Activated B cell treated with CpG ODN at 0.5 μM for 24 hours (primary cell): ENCODE measurements at regions of chr2 and their contacts with region 1.

Region 1: GRCh38 chr2:33583194-33583938 is 15.7 kb downstream of the FAM98A start:
- DNase-seq: no peak
- ATAC-seq: peak; percentile 71
- H3K4me3 Mint-ChIP-seq: no peak overlapping the region
- H3K27ac Mint-ChIP-seq: peak overlapping the region; percentile 71
- H3K4me1 Mint-ChIP-seq: peaks cover 24% of the 10 kb centered on the region
- H3K27me3 Mint-ChIP-seq: no peaks in the 10 kb centered on the region
- CTCF ChIP-seq: peak; percentile 93

Region 2: DNA sequence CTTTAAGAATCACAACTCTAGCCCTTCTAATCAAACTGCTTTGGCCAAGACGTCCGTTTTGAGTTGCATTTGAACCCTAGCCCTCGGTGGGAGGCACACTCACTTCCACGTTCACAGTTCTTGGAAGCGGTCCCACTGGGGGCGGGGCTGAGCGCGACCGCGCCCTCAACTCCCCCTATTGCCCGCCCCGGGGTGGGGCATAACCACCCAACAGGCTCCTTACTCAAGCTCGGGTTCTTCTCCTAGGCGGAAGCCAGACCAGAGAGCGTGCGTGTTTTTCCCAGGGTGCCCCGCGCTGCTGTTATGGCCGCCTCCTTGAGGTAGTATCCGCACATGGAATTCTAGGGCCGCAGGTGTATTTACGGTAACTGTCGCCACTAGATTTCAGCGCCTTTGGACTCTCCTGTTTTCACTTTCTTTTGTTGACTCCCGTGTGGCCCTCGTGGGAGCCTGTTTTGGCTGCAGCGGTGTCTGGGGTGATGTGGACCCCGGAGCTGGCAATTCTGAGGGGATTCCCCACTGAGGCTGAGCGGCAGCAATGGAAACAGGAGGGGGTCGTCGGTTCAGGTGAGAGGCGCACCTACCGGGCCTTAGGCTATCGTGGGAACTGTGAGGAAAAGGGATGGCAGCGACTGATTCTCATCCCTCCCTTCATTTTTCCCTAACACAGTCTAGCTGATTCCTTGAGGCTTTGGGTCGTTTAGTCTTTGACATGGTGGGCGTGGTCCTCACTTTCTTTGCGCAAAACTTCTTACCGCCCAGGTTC is 955.4 kb before region 1 on chr2 and contains the start of gene TTC27:
- CTCF ChIA-PET with region 1: interaction called, 4 read pairs
- POLR2A ChIA-PET with region 1: no interaction called
- intact Hi-C with region 1: loop called (anchors 1 kb)
- DNase-seq: peak; percentile 93
- ATAC-seq: peak; percentile 100
- H3K4me3 Mint-ChIP-seq: peak within 1 kb of the TSS; percentile 97
- H3K27ac Mint-ChIP-seq: peak within 1 kb of the TSS; percentile 93
- H3K4me1 Mint-ChIP-seq: peaks cover 27% of the 10 kb centered on the region
- H3K27me3 Mint-ChIP-seq: no peaks in the 10 kb centered on the region
- CTCF ChIP-seq: no peak
- total RNA-seq, gene TTC27: 34.8 and 36.3 TPM in 2 replicates

Region 3: DNA sequence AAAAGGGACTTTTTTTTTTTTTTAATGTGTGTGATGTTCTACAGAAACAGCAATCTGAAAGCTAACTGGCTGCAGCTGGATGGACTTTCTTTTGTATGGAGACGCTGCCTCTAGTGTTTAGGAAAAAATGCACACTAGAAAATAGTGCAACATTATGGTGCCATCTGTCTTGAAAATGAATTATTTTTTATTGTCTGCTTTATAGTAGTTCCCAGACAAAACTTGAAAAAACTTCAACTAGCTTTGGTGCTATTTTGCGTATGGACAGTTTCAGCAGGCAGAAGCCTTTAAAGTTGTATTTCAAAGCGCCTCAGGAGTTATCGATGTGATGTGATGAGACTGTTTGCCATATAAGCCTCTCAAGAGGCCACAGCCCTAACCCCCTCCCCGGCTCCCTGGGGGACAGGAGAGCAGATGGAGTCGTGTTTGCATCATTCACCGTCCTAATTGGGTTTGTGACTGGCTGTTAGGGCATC is 549.7 kb before region 1 on chr2:
- CTCF ChIA-PET with region 1: interaction called, 3 read pairs
- POLR2A ChIA-PET with region 1: no interaction called
- intact Hi-C with region 1: loop called (anchors 5 kb)
- DNase-seq: no peak
- ATAC-seq: no peak
- H3K4me3 Mint-ChIP-seq: no peak overlapping the region
- H3K27ac Mint-ChIP-seq: no peak overlapping the region
- H3K4me1 Mint-ChIP-seq: no peaks in the 10 kb centered on the region
- H3K27me3 Mint-ChIP-seq: no peaks in the 10 kb centered on the region
- CTCF ChIP-seq: no peak

Region 4: GRCh38 chr2:33272001-33272400 is 311.4 kb before region 1 on chr2:
- CTCF ChIA-PET with region 1: no interaction called
- POLR2A ChIA-PET with region 1: no interaction called
- intact Hi-C with region 1: loop called (anchors 5 kb)
- DNase-seq: no peak
- ATAC-seq: peak; percentile 90
- H3K4me3 Mint-ChIP-seq: peak overlapping the region; percentile 15
- H3K27ac Mint-ChIP-seq: no peak overlapping the region
- H3K4me1 Mint-ChIP-seq: peaks cover 21% of the 10 kb centered on the region
- H3K27me3 Mint-ChIP-seq: peaks cover 14% of the 10 kb centered on the region
- CTCF ChIP-seq: no peak

Region 5: GRCh38 chr2:33433279-33434235 is 149.8 kb before region 1 on chr2:
- CTCF ChIA-PET with region 1: no interaction called
- POLR2A ChIA-PET with region 1: no interaction called
- intact Hi-C with region 1: no loop called
- DNase-seq: no peak
- ATAC-seq: no peak
- H3K4me3 Mint-ChIP-seq: no peak overlapping the region
- H3K27ac Mint-ChIP-seq: no peak overlapping the region
- H3K4me1 Mint-ChIP-seq: no peaks in the 10 kb centered on the region
- H3K27me3 Mint-ChIP-seq: peaks cover 1% of the 10 kb centered on the region
- CTCF ChIP-seq: no peak

Region 6: DNA sequence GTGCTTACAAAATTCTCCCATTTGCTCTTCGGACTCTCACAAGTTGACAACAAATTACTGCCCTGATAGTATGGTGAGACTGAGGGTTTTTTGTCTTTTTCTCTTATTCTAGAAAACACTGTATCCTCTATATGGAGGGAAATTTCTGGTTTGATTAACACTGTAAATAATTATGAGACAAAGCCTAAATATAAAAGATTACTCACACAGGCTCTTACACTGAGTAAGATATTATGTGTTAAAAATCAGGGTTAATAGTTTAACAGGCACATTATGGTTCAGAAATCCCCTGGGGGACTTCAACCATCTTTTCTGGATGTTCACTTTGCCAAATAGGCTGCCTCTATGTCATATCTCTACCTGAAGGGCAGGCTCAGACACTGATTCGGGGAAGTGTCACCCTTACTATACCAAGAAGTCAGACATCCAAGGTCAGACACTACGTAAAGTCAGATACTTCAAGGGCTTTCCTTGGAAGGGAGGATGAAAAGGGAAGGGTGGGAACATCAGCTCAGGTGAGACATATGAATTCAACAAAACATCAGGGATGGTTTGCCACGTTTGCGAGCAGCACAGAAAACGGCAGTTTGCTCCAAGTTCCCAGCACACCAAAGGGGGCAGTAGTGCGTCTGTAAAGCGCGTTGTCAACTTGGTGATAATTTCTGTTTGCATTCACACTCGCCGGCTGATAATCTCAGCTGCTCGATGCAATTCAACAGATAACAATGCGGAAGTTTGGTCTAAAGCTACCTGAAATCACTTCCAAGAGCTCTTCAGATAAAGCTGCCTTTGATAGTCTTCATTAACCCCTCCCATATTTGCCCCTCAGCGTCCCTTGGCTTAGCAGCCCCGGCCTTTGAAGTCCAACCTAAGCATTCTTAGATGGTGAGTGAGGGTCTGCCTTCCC is 107.9 kb before region 1 on chr2:
- CTCF ChIA-PET with region 1: interaction called, 63 read pairs
- POLR2A ChIA-PET with region 1: interaction called, 23 read pairs
- intact Hi-C with region 1: loop called (anchors 1 kb)
- DNase-seq: no peak
- ATAC-seq: peak; percentile 60
- H3K4me3 Mint-ChIP-seq: peak overlapping the region; percentile 97
- H3K27ac Mint-ChIP-seq: peak overlapping the region; percentile 98
- H3K4me1 Mint-ChIP-seq: peaks cover 46% of the 10 kb centered on the region
- H3K27me3 Mint-ChIP-seq: no peaks in the 10 kb centered on the region
- CTCF ChIP-seq: peak; percentile 47